ENCODE measurements at regions of chr1 and their contacts with region 1.

Region 1: GRCh38 chr1:110726755-110727154 is 52.0 kb upstream of the KCNA3 start:
- DNase-seq: no peak
- ATAC-seq: peak; percentile 55
- H3K4me3 Mint-ChIP-seq: peak overlapping the region; percentile 60
- H3K27ac Mint-ChIP-seq: peak overlapping the region; percentile 80
- H3K4me1 Mint-ChIP-seq: peaks cover 33% of the 10 kb centered on the region
- H3K27me3 Mint-ChIP-seq: no peaks in the 10 kb centered on the region

Region 2: DNA sequence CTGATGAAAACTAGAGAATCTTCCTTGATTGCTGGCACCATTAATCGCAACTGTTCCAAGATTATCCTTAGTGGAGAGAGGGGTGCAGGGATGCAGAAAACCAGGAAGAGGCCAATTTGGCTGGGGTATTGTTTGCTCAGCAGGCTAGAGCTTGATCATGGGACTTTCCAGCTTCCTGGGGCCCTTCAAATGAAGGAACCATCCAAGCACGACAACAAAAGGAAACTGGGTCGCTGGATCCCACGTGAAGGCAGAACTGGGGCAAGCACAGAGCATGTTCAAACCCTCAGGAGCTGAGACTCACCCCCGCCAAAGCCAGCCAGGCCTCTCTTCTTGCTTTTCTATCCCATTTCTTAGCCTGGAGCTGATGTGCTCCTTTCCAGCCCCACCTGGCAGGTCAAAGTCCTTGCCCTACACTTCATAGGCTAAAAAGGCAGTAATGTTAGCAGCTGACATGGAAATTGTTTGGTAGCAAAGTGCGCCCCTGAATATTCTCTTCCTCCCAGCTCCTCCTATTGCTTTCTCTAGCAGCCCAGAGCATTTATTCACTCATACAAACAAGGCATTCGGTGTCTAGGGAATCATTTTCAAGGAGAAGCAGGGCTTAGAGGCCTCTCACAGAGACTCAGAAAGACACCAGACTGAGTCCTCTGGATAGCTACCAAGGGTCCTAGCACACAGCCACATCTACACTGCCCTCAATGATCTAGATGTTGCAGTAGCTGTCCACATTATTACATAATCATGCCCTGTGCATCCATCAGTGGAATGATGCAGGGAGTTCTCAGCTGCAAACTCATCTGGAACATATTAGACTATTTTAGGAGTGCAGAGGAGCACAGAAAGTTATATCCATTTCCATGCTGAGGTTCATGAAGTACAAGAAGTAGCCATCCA is 132.1 kb before region 1 on chr1:
- CTCF ChIA-PET with region 1: no interaction called
- POLR2A ChIA-PET with region 1: no interaction called
- DNase-seq: no peak
- ATAC-seq: no peak
- H3K4me3 Mint-ChIP-seq: no peak overlapping the region
- H3K27ac Mint-ChIP-seq: no peak overlapping the region
- H3K4me1 Mint-ChIP-seq: peaks cover 3% of the 10 kb centered on the region
- H3K27me3 Mint-ChIP-seq: peaks cover 15% of the 10 kb centered on the region

Region 3: DNA sequence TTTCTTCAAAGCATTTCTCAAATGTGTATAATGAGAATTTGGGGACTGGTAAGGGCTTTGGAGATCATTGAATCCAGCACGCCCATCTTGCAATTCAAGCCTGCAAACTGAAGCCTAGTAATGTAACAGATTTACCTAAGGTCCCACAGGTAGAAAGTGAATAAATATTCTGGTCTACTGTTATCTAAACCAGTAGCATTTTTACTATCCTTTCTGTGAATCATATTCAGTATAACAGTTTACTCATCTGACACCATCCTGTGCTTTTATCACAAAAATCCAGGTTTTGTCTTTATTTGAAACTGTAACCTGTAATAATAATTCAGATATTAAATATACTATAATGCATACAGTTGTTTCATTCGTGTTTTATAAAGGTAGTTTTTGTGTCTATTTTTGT is 69.4 kb before region 1 on chr1:
- CTCF ChIA-PET with region 1: no interaction called
- POLR2A ChIA-PET with region 1: no interaction called
- DNase-seq: no peak
- ATAC-seq: no peak
- H3K4me3 Mint-ChIP-seq: no peak overlapping the region
- H3K27ac Mint-ChIP-seq: no peak overlapping the region
- H3K4me1 Mint-ChIP-seq: peaks cover 21% of the 10 kb centered on the region
- H3K27me3 Mint-ChIP-seq: no peaks in the 10 kb centered on the region

Region 4: GRCh38 chr1:110674337-110675059 is 52.3 kb before region 1 on chr1 and contains the start of gene KCNA3:
- CTCF ChIA-PET with region 1: no interaction called
- POLR2A ChIA-PET with region 1: interaction called, 12 read pairs
- DNase-seq: peak; percentile 77
- ATAC-seq: peak; percentile 43
- H3K4me3 Mint-ChIP-seq: peak within 1 kb of the TSS; percentile 95
- H3K27ac Mint-ChIP-seq: peak within 1 kb of the TSS; percentile 91
- H3K4me1 Mint-ChIP-seq: peaks cover 33% of the 10 kb centered on the region
- H3K27me3 Mint-ChIP-seq: no peaks in the 10 kb centered on the region
- total RNA-seq, gene KCNA3: 49.0 to 49.3 TPM

Region 5: GRCh38 chr1:111006541-111006940 is 279.8 kb after region 1 on chr1:
- CTCF ChIA-PET with region 1: no interaction called
- POLR2A ChIA-PET with region 1: no interaction called
- DNase-seq: no peak
- ATAC-seq: no peak
- H3K4me3 Mint-ChIP-seq: no peak overlapping the region
- H3K27ac Mint-ChIP-seq: no peak overlapping the region
- H3K4me1 Mint-ChIP-seq: no peaks in the 10 kb centered on the region
- H3K27me3 Mint-ChIP-seq: peaks cover 15% of the 10 kb centered on the region